MCF 10A (cell line): ENCODE measurements at regions of chr3 and their contacts with region 1.

Region 1: GRCh38 chr3:31105438-31106077 is 211.1 kb upstream of the GADL1 start:
- DNase-seq: peak; percentile 96
- H3K4me3 Mint-ChIP-seq: peak overlapping the region; percentile 54
- H3K27ac Mint-ChIP-seq: peak overlapping the region; percentile 72
- H3K4me1 Mint-ChIP-seq: peaks cover 52% of the 10 kb centered on the region
- H3K27me3 Mint-ChIP-seq: no peaks in the 10 kb centered on the region
- CTCF ChIP-seq: no peak

Region 2: DNA sequence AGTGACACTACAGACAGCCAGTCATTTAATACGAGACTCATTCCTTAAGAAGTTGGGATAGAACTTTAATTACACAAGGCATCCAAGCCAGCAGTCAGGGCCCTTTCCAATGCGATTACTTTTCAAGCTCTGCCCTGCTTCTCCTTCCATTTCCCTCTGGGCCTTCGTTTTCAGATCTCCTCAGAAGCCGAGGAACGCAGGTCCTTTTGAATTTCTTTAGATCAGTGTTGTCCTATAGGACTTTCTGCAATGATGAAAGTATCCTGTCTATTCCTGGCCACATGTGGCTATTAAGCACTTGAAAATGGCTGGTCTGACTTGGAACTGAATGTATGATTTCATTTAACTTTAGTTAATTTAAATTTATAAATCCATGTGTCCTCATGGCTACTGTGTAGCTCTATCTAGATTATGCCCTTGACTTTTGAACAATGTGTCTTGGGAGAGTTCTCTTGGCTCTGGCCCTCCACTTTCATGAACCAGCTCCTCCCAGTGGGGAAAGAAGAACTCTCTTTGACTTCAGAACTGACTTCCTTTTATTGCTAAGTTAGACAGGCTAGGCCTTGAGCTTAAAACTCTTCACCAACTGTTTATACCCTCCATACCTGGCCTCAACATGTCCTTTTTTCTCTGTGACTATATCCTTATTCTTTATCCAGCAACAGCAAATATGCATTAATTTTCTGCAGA is 476.5 kb before region 1 on chr3:
- CTCF ChIA-PET with region 1: no interaction called
- POLR2A ChIA-PET with region 1: no interaction called
- intact Hi-C with region 1: no loop called
- DNase-seq: no peak
- H3K4me3 Mint-ChIP-seq: peak overlapping the region; percentile 19
- H3K27ac Mint-ChIP-seq: peak overlapping the region; percentile 77
- H3K4me1 Mint-ChIP-seq: peaks cover 63% of the 10 kb centered on the region
- H3K27me3 Mint-ChIP-seq: no peaks in the 10 kb centered on the region
- CTCF ChIP-seq: peak; percentile 9

Region 3: GRCh38 chr3:31077021-31077601 is 28.4 kb before region 1 on chr3:
- CTCF ChIA-PET with region 1: interaction called, 3 read pairs
- POLR2A ChIA-PET with region 1: interaction called, 13 read pairs
- intact Hi-C with region 1: loop called (anchors 1 kb)
- DNase-seq: peak; percentile 85
- H3K4me3 Mint-ChIP-seq: no peak overlapping the region
- H3K27ac Mint-ChIP-seq: peak overlapping the region; percentile 4
- H3K4me1 Mint-ChIP-seq: peaks cover 18% of the 10 kb centered on the region
- H3K27me3 Mint-ChIP-seq: no peaks in the 10 kb centered on the region
- CTCF ChIP-seq: no peak